ENCODE measurements at regions of chr4 and their contacts with region 1.

Region 1: DNA sequence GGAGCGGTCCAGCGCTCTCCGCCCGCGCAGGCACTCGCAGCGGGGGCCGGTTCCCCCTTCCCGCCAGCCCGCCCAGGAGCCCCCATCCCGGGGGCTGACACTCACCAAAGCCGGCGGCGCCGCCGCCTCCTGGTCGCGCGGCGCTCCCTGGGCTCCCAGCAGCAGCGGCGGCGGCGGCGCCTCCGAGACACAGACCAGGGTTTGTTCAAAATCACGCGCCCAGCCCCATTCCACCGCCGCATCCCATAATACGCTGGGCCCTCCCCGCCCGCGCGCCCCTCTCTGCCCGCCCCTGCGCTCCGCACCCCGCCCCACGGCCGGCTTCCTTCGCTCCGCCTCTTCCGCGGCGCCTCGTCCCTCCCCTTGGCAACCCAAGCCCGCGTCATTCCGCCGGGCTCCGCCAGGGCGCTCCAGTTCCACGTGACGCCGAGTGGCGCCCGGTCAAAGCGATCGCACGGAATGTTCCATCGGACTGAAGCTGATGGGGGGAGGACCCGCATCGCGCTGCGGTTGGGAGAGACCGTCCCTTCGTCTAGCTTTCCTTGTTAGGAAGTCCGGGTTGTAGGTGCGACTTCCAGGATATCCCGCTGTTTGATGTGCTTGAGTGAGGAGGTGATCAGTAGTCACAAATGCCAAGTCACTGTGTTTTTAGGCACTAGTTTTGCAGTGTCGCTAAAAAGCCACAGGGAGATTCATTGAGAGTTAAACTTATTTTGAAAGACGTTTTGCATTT is 2.2 kb upstream of the LIN54 start:
- DNase-seq: peak; percentile 99
- ATAC-seq: peak; percentile 88
- H3K4me3 Mint-ChIP-seq: peak overlapping the region; percentile 99
- H3K27ac Mint-ChIP-seq: peak overlapping the region; percentile 93
- H3K4me1 Mint-ChIP-seq: peaks cover 31% of the 10 kb centered on the region
- H3K27me3 Mint-ChIP-seq: no peaks in the 10 kb centered on the region

Region 2: DNA sequence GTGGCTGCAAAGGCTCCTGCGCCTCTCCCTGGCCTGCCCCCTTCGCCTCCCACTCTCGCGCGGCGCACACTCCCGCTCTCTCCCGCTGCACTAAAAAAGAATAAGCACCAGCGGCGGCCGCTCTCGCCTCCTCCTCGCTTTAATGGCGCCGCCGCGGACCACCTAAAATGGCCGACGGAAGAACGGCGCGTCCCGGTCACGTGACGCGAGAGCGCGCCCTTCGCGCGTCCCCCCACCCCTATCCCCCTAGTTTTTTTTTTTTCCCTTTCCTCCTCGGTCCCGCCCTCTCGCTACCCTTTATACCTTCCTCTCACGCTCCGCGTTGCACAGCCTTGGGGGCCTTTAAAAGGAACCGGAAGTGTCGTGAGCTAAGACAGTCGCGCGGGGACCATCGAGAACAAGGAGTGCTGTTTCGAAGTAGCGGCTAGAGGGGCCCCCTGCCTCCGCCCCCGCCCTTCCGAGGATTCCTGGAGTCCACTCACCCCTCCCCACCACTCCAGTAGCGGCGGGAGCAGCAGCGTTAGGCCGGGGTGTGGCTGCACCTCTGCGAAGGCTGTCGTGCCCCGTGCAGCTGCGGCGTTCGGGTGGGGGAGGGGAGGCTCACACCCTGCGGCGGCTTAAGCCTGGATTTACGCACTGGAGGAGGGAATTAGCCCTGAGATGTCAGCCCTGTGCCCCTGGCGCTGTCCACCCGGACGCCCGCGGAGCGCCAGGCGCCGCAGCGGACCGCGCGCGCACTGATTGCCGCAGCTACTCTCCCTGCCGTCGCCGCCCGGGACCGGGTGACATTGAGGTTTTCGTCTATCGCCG is 638.8 kb before region 1 on chr4 and contains the start of gene HNRNPD:
- CTCF ChIA-PET with region 1: no interaction called
- POLR2A ChIA-PET with region 1: no interaction called
- intact Hi-C with region 1: loop called (anchors 1 kb)
- DNase-seq: peak; percentile 97
- ATAC-seq: peak; percentile 90
- H3K4me3 Mint-ChIP-seq: peak within 1 kb of the TSS; percentile 89
- H3K27ac Mint-ChIP-seq: peak within 1 kb of the TSS; percentile 99
- H3K4me1 Mint-ChIP-seq: peaks cover 34% of the 10 kb centered on the region
- H3K27me3 Mint-ChIP-seq: no peaks in the 10 kb centered on the region
- total RNA-seq, gene HNRNPD: 505 to 510 TPM

Region 3: DNA sequence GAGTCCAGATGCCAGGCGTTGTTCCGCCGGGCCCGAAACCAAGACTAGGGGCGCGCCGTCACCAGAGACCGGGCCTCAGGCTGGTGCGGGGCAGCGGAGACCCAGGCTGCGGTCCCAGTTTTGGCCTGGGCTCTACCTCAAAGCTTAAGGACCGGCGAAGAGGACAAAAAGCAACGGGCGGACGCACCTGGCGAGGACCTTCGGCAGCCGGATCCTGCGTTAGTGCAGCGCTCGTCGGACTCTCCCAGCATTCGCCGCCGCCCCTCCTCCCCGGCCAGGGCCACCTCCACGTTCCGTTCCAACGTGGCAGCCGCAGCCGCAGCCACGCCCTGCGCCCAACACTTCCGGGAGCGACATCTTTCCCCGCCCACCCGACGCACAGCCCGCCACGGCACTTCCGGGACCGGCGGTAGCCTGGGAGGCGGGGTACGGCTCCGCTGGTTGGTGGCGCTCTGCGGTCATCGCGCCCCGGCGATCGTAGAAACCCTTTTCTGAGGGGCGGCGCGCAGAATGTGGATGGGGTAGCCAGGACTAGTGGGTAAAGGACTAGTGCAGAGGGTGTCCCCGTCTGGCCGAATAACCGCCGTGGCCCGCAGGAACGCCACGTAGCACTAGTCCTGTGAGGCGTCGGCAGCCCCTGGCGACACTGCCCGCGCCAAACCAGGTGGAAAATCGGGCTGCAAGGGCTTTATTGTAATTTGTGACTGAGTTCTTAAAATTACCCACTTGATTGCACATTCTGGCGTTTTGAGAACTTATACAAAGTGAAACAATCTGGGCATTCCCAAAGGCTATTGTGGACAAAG is 121.7 kb before region 1 on chr4 and contains the start of gene SEC31A:
- CTCF ChIA-PET with region 1: no interaction called
- POLR2A ChIA-PET with region 1: no interaction called
- intact Hi-C with region 1: loop called in 1 of 2 experiments (anchors 1 kb)
- DNase-seq: peak; percentile 99
- ATAC-seq: peak; percentile 94
- H3K4me3 Mint-ChIP-seq: peak within 1 kb of the TSS; percentile 81
- H3K27ac Mint-ChIP-seq: peak within 1 kb of the TSS; percentile 89
- H3K4me1 Mint-ChIP-seq: peaks cover 42% of the 10 kb centered on the region
- H3K27me3 Mint-ChIP-seq: no peaks in the 10 kb centered on the region
- total RNA-seq, gene SEC31A: 80.3 to 124 TPM

Region 4: GRCh38 chr4:83074086-83074704 is 61.3 kb after region 1 on chr4:
- CTCF ChIA-PET with region 1: no interaction called
- POLR2A ChIA-PET with region 1: no interaction called
- intact Hi-C with region 1: loop called in 1 of 2 experiments (anchors 2 kb)
- DNase-seq: peak; percentile 63
- ATAC-seq: peak; percentile 91
- H3K4me3 Mint-ChIP-seq: peak overlapping the region; percentile 25
- H3K27ac Mint-ChIP-seq: no peak overlapping the region
- H3K4me1 Mint-ChIP-seq: peaks cover 13% of the 10 kb centered on the region
- H3K27me3 Mint-ChIP-seq: no peaks in the 10 kb centered on the region

Region 5: DNA sequence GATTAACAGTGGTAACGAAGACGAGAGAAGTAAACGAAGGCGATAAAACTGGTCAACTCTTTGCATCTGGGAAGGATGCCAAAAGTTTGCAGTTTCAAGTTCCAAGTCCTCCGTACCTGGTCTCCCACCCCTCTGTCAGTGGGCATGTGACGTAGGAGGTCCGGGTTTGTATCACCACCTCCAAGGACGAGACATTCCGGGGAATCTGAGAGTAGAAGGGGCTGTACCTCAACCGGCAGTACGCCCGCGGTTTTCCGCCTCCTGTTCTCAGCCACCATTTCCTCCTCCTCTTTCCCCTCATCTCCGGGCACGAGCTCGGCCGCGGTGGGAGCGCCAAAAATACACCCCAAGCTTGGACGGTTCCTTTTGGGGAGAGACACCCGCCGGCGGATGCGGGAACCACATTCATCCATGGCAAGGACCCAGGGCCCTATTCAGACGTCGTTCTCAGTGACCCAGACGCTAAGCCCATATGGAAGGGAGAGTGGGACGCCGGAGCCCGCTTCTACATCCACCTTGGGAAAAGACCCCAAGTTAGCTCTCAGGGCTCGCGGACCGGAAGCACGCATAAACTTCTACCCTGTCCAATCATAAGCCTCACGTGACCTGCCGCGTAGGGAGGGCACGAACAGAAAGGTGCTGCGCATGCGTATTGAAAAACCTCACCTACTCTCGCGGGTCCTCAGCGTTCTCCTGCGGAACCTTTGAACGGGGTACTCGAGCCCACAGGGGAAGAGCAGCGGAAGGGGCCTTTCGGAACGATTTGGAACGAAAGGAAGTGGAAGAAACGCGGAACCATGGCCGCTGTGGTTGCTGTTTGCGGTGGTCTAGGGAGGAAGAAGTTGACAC is 442.7 kb after region 1 on chr4 and contains the starts of genes HELQ and MRPS18C:
- CTCF ChIA-PET with region 1: no interaction called
- POLR2A ChIA-PET with region 1: interaction called, 5 read pairs
- intact Hi-C with region 1: loop called (anchors 1 to 10 kb)
- DNase-seq: peak; percentile 97
- ATAC-seq: peak; percentile 92
- H3K4me3 Mint-ChIP-seq: peak within 1 kb of the TSS; percentile 97
- H3K27ac Mint-ChIP-seq: peak within 1 kb of the TSS; percentile 99
- H3K4me1 Mint-ChIP-seq: peaks cover 37% of the 10 kb centered on the region
- H3K27me3 Mint-ChIP-seq: no peaks in the 10 kb centered on the region
- total RNA-seq, gene HELQ: 9.3 to 10.1 TPM
- total RNA-seq, gene MRPS18C: 78.0 to 89.5 TPM